Caco-2 (cell line): ENCODE measurements at regions of chr16 and their contacts with region 1.

Region 1: GRCh38 chr16:25126820-25127232 is 15.3 kb downstream of the LCMT1 start:
- DNase-seq: no peak
- H3K4me3 ChIP-seq: no peak overlapping the region
- H3K4me3 Mint-ChIP-seq: no peak overlapping the region
- H3K27ac Mint-ChIP-seq: no peak overlapping the region
- H3K4me1 ChIP-seq: peaks cover 3% of the 10 kb centered on the region; the same call in 1 of the 2 replicates
- H3K4me1 Mint-ChIP-seq: peaks cover 11% of the 10 kb centered on the region
- H3K27me3 ChIP-seq: no peaks in the 10 kb centered on the region
- H3K27me3 Mint-ChIP-seq: no peaks in the 10 kb centered on the region
- CTCF ChIP-seq: peak; percentile 41 to 73

Region 2: GRCh38 chr16:25224731-25225319 is 98.0 kb after region 1 on chr16:
- CTCF ChIA-PET with region 1: interaction called, 19 read pairs
- POLR2A ChIA-PET with region 1: no interaction called
- intact Hi-C with region 1: loop called (anchors 1 kb)
- DNase-seq: no peak
- H3K4me3 ChIP-seq: no peak overlapping the region
- H3K4me3 Mint-ChIP-seq: no peak overlapping the region
- H3K27ac Mint-ChIP-seq: no peak overlapping the region
- H3K4me1 ChIP-seq: no peaks in the 10 kb centered on the region
- H3K4me1 Mint-ChIP-seq: no peaks in the 10 kb centered on the region
- H3K27me3 ChIP-seq: no peaks in the 10 kb centered on the region
- H3K27me3 Mint-ChIP-seq: no peaks in the 10 kb centered on the region
- CTCF ChIP-seq: no peak